ENCODE measurements at regions of chr6 and their contacts with region 1.

Region 1: GRCh38 chr6:24431045-24431451 is 28.3 kb downstream of the MRS2 start:
- DNase-seq: no peak
- H3K4me3 ChIP-seq: no peak overlapping the region
- H3K27ac ChIP-seq: no peak overlapping the region
- H3K4me1 ChIP-seq: no peaks in the 10 kb centered on the region
- H3K27me3 ChIP-seq: no peaks in the 10 kb centered on the region
- CTCF ChIP-seq: peak; percentile 65 to 73 (median 72)
- EP300 ChIP-seq: no peak
- POLR2A ChIP-seq: no peak

Region 2: GRCh38 chr6:23905133-23905815 is 525.8 kb before region 1 on chr6:
- intact Hi-C with region 1: no loop called
- DNase-seq: no peak
- H3K4me3 ChIP-seq: no peak overlapping the region
- H3K27ac ChIP-seq: peak overlapping the region in 1 of 4 donors; percentile 35
- H3K4me1 ChIP-seq: peaks cover 0 to 15% (median 13%) of the 10 kb centered on the region in 4 donors
- H3K27me3 ChIP-seq: no peaks in the 10 kb centered on the region
- CTCF ChIP-seq: no peak
- EP300 ChIP-seq: no peak
- POLR2A ChIP-seq: no peak

Region 3: DNA sequence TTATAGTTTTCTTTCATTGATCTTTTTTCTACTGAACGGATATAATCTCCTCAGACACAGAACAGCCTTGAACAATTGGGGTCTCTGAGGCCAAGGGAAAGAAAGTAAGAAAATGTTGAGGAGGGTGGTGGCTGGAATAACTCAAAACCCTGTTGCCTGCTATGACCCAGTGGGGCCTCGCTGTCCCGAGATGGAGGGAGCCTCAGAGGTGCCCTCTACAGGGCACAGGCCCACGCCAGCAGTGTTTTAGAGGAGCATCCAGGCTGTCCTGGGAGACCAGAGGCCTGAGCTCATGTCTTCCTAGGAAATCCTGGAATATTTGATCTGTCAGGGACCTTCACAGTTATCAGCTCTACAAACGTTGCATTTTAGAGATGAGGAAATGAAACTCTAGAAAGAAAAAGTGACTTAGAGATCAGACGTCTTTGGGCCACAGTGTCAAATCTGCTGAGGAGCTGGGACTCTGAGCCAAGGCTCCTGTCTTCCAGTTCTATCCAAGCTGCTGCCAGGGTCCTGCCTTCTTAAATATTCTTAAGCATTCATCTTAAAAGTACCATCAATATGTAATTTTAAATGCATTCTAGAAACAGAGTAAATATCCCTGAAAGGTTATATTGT is 90.0 kb after region 1 on chr6:
- intact Hi-C with region 1: loop called (anchors 5 kb)
- DNase-seq: no peak
- H3K4me3 ChIP-seq: no peak overlapping the region
- H3K27ac ChIP-seq: no peak overlapping the region
- H3K4me1 ChIP-seq: peaks cover 0 to 14% (median 8%) of the 10 kb centered on the region in 4 donors
- H3K27me3 ChIP-seq: no peaks in the 10 kb centered on the region
- CTCF ChIP-seq: peak; percentile 32 to 62 (median 46)
- EP300 ChIP-seq: no peak
- POLR2A ChIP-seq: no peak

Region 4: DNA sequence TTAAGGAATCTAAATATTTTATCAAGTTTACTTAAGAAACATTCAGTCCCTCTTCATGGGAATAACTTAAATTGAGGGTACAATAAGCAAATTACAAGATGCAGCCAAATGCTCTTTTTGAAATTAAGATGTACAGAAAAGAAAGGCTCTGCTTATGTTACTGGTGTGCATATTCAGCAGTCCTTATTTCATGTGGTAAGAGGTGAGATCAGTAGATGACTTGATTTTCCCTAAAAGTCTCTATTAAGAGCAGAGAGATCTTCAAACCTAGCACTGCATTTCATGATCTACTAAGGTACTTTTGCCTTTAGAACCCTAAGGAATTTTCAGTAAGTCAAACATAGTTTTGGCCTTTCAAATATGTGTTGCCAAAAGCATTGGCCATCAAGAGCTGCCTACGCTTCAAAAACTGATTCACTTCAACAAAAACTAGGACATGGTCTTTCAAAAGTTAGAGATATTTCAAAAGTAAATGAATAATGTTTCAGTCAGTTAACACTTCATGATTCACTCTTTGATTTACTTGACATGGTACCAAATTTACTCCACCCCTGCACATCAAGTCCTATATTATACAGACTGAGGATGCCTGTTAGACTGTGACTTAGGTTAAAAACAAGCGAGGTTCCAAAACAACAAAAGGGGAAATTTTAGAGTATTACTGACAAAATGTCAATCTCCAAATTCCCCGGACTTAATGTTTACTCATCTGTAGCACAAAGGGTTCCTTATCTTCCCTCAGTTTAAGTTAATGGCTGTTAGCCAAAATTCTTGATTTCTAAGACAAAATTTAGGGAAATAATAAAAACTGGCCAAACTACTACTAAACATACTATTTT is 268.7 kb after region 1 on chr6:
- intact Hi-C with region 1: loop called (anchors 10 kb)
- DNase-seq: no peak
- H3K4me3 ChIP-seq: no peak overlapping the region
- H3K27ac ChIP-seq: peak overlapping the region in 1 of 4 donors; percentile 0
- H3K4me1 ChIP-seq: peaks cover 0 to 7% (median 0%) of the 10 kb centered on the region in 4 donors
- H3K27me3 ChIP-seq: no peaks in the 10 kb centered on the region
- CTCF ChIP-seq: no peak
- EP300 ChIP-seq: no peak
- POLR2A ChIP-seq: no peak

Region 5: DNA sequence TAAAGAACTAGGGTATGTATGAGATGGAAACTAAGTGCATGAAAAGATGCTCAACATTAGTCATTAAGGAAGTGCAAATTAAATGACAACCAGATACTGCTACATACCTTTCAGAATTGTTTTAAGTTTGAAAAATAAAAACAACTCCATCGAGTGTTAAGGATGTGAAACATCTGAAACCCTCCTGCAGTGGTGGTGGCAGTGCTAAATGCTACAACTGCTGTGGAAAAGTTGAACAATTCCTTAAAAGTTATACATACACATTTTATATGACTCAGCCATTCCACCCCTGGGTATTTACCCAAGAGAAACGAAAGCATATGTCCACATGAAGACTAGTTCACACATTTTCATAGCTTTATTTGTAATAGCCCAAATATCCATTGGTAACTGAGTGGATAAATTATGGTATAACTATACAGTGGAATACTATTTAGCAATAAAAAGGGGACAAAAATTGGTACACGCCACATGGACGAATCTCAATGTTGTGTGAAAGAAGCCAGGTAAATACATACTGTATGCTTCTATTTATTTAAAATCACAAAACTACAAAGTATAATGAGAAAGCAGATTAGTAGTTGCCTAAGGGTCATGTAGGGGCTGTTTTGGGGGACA is 357.1 kb after region 1 on chr6:
- intact Hi-C with region 1: no loop called
- DNase-seq: no peak
- H3K4me3 ChIP-seq: no peak overlapping the region
- H3K27ac ChIP-seq: no peak overlapping the region
- H3K4me1 ChIP-seq: no peaks in the 10 kb centered on the region
- H3K27me3 ChIP-seq: no peaks in the 10 kb centered on the region
- CTCF ChIP-seq: no peak
- EP300 ChIP-seq: no peak
- POLR2A ChIP-seq: no peak